ENCODE measurements at regions of chr16 and their contacts with region 1.

Region 1: DNA sequence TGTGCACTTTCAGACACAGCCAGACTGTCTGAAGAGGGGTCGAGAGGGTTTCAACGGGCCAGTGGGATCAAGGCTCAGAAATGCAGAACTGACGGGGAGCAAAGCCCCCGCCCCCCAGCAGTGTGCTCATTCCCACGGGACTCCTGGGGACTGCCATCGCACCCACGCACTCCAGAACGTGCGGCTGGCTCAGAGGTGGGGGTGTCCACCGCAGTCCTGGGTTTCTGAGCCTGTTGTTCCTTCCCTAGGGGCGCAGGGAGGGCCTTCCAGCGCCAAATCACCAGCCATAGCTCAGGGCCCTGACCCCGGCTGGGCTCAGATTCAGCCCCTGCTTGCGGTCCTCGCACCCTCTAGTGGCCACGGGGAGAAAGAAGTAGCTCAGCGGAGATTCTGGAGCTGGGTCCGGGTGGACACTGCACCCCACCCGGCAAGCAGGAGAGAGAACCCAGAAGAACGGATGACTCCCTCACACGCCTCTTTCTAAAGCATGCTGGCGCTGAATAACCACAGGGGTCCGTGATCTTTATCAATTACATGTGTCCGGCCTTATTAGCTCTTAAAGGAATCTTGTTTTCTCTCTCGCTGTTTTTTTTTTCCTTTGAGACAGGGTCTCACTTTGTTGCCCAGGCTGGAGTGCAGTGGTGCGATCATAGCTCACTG is 45.0 kb upstream of the USP7 start:
- ATAC-seq: peak; percentile 94 to 100 (median 98)
- H3K4me3 ChIP-seq: no peak overlapping the region
- H3K27ac ChIP-seq: no peak overlapping the region
- H3K4me1 ChIP-seq: peaks cover 0 to 3% of the 10 kb centered on the region in 2 donors

Region 2: GRCh38 chr16:8692502-8692901 is 316.2 kb before region 1 on chr16:
- in situ Hi-C with region 1: no loop called
- ATAC-seq: no peak
- H3K4me3 ChIP-seq: no peak overlapping the region
- H3K27ac ChIP-seq: no peak overlapping the region
- H3K4me1 ChIP-seq: peaks cover 3 to 7% of the 10 kb centered on the region in 2 donors

Region 3: GRCh38 chr16:8892101-8892575 is 116.6 kb before region 1 on chr16:
- in situ Hi-C with region 1: no loop called
- ATAC-seq: peak in 3 of 8 experiments; percentile 27 to 39 (median 34)
- H3K4me3 ChIP-seq: no peak overlapping the region
- H3K27ac ChIP-seq: peak overlapping the region; percentile 42 to 79
- H3K4me1 ChIP-seq: peaks cover 12 to 17% of the 10 kb centered on the region in 2 donors

Region 4: GRCh38 chr16:8905168-8905762 is 103.5 kb before region 1 on chr16:
- in situ Hi-C with region 1: loop called in 1 of 9 experiments (anchors 25 kb)
- ATAC-seq: peak in 7 of 8 experiments; percentile 28 to 78 (median 43)
- H3K4me3 ChIP-seq: no peak overlapping the region
- H3K27ac ChIP-seq: no peak overlapping the region
- H3K4me1 ChIP-seq: no peaks in the 10 kb centered on the region

Region 5: GRCh38 chr16:9072806-9073341 is 64.1 kb after region 1 on chr16:
- in situ Hi-C with region 1: no loop called
- ATAC-seq: peak in 3 of 8 experiments; percentile 28 to 69 (median 47)
- H3K4me3 ChIP-seq: no peak overlapping the region
- H3K27ac ChIP-seq: no peak overlapping the region
- H3K4me1 ChIP-seq: peaks cover 7 to 17% of the 10 kb centered on the region in 2 donors

Region 6: GRCh38 chr16:9134739-9135138 is 126.0 kb after region 1 on chr16:
- in situ Hi-C with region 1: no loop called
- ATAC-seq: peak; percentile 54 to 87 (median 74)
- H3K4me3 ChIP-seq: no peak overlapping the region
- H3K27ac ChIP-seq: no peak overlapping the region
- H3K4me1 ChIP-seq: peaks cover 0 to 2% of the 10 kb centered on the region in 2 donors

Measured in motor neuron (in vitro differentiated cells).